Vagina (tissue), 2 donors: ENCODE measurements at regions of chr13 and their contacts with region 1.

Region 1: GRCh38 chr13:59061621-59062020 is 1102.1 kb downstream of the DIAPH3 start:
- DNase-seq: no peak
- H3K4me3 ChIP-seq: no peak overlapping the region
- H3K27ac ChIP-seq: no peak overlapping the region
- H3K4me1 ChIP-seq: no peaks in the 10 kb centered on the region
- H3K27me3 ChIP-seq: no peaks in the 10 kb centered on the region
- CTCF ChIP-seq: no peak
- POLR2A ChIP-seq: no peak

Region 2: DNA sequence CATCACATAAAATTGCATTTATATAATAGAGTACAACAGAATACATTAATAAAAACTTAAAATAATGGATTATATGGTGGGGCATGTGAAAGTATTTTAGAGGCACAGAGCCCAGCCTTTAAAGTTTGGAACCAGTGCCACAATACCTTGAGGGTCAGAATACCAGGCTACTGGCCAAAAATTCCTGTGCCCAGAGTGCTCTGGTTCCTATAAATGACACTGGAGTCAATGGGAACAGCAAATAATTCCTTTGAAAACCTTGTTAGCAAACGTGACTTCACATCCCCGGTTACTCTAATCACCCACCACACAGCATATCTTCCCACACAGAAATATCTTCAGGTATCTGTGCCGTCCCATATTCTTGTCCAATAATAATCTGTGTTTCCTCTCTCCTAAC is 140.5 kb before region 1 on chr13:
- intact Hi-C with region 1: no loop called
- DNase-seq: no peak
- H3K4me3 ChIP-seq: no peak overlapping the region
- H3K27ac ChIP-seq: no peak overlapping the region
- H3K4me1 ChIP-seq: no peaks in the 10 kb centered on the region
- H3K27me3 ChIP-seq: no peaks in the 10 kb centered on the region
- CTCF ChIP-seq: no peak
- POLR2A ChIP-seq: no peak

Region 3: DNA sequence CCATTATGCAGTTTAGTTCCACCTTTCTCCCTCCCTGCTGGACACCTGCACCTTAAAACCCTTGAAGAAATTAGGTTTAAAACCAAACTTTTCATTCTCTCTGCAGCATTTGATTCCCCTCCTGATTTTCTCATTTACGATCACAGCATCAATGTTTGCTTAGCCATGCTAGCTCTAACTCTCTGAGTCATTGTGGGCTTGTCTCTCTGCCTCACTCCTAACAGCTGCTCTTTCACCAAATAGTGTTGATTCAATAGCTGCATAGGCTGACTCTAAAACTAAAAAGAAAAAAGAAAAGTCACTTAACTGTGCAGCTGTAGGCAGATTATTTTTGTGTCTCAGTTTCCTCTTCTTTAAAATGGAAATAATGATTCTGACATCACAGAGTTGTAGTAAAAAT is 22.8 kb before region 1 on chr13:
- intact Hi-C with region 1: loop called (anchors 1 kb)
- DNase-seq: no peak
- H3K4me3 ChIP-seq: no peak overlapping the region
- H3K27ac ChIP-seq: no peak overlapping the region
- H3K4me1 ChIP-seq: no peaks in the 10 kb centered on the region
- H3K27me3 ChIP-seq: no peaks in the 10 kb centered on the region
- CTCF ChIP-seq: no peak
- POLR2A ChIP-seq: no peak

Region 4: DNA sequence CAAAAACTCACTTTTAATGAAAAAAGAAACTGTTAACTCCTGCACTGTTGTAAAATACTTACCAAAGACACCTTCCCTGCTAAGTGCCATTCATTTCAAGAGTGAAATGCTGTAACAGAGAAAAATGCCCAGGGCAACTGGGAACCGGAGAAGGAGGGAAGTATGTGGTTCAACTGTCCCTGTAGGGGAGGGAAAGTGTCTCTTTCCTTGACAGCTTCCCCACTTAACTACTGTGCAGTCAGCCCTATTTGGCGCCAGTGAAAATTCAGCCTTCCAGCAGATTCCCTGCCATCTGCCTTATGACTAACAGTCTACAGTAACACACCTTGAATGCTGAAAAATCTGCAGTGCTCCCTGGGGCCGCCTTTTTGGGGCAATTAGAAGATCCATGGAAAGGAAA is 313.1 kb after region 1 on chr13:
- intact Hi-C with region 1: no loop called
- DNase-seq: no peak
- H3K4me3 ChIP-seq: no peak overlapping the region
- H3K27ac ChIP-seq: no peak overlapping the region
- H3K4me1 ChIP-seq: no peaks in the 10 kb centered on the region
- H3K27me3 ChIP-seq: no peaks in the 10 kb centered on the region
- CTCF ChIP-seq: no peak
- POLR2A ChIP-seq: no peak